Activated CD4-positive, alpha-beta T cell treated with anti-CD3 and anti-CD28 coated beads for 36 hours (primary cell): ENCODE measurements at regions of chr19 and their contacts with region 1.

Region 1: GRCh38 chr19:47994209-47994802 is at the start of gene ELSPBP1:
- DNase-seq: no peak
- ATAC-seq: no peak
- H3K4me3 Mint-ChIP-seq: no peak within 1 kb of the TSS
- H3K27ac Mint-ChIP-seq: no peak within 1 kb of the TSS
- H3K4me1 Mint-ChIP-seq: no peaks in the 10 kb centered on the region
- H3K27me3 Mint-ChIP-seq: peaks cover 23% of the 10 kb centered on the region
- total RNA-seq, gene ELSPBP1: not detected

Region 2: GRCh38 chr19:47561440-47562057 is 432.8 kb before region 1 on chr19:
- CTCF ChIA-PET with region 1: no interaction called
- POLR2A ChIA-PET with region 1: no interaction called
- intact Hi-C with region 1: loop called in 1 of 2 experiments (anchors 5 kb)
- DNase-seq: no peak
- ATAC-seq: no peak
- H3K4me3 Mint-ChIP-seq: no peak overlapping the region
- H3K27ac Mint-ChIP-seq: no peak overlapping the region
- H3K4me1 Mint-ChIP-seq: no peaks in the 10 kb centered on the region
- H3K27me3 Mint-ChIP-seq: no peaks in the 10 kb centered on the region

Region 3: GRCh38 chr19:47901370-47901769 is 92.9 kb before region 1 on chr19:
- CTCF ChIA-PET with region 1: no interaction called
- POLR2A ChIA-PET with region 1: no interaction called
- intact Hi-C with region 1: no loop called
- DNase-seq: no peak
- ATAC-seq: no peak
- H3K4me3 Mint-ChIP-seq: no peak overlapping the region
- H3K27ac Mint-ChIP-seq: no peak overlapping the region
- H3K4me1 Mint-ChIP-seq: no peaks in the 10 kb centered on the region
- H3K27me3 Mint-ChIP-seq: peaks cover 12% of the 10 kb centered on the region